ENCODE measurements at regions of chr17 and their contacts with region 1.

Region 1: GRCh38 chr17:51153210-51154072 is at the start of gene NME1:
- DNase-seq: peak; percentile 96
- ATAC-seq: peak; percentile 91
- H3K4me3 Mint-ChIP-seq: no peak within 1 kb of the TSS
- H3K27ac Mint-ChIP-seq: no peak within 1 kb of the TSS
- H3K4me1 Mint-ChIP-seq: no peaks in the 10 kb centered on the region
- H3K27me3 Mint-ChIP-seq: no peaks in the 10 kb centered on the region
- CTCF ChIP-seq: no peak
- total RNA-seq, gene NME1: 210 to 238 TPM (median 210 TPM) in 3 replicates

Region 2: DNA sequence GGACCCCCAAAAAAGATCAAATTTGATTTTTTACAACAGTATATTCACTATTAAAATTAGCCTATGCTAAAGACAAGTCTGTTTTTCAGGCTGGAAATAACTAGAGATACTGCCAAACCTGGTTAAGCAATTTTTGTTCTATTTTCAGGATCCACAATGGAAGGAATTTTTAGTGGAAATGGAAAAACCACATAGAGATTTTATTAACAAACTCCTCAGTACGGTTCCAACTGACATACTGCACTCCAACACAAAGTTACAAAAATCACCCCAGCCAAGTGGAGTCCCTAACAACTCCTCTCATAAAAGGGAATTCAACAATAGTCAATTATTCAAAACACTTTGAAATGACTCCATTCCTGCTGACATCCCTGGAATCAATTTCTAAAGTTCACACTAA is 185.6 kb before region 1 on chr17:
- CTCF ChIA-PET with region 1: no interaction called
- POLR2A ChIA-PET with region 1: no interaction called
- DNase-seq: no peak
- ATAC-seq: no peak
- H3K4me3 Mint-ChIP-seq: no peak overlapping the region
- H3K27ac Mint-ChIP-seq: no peak overlapping the region
- H3K4me1 Mint-ChIP-seq: no peaks in the 10 kb centered on the region
- H3K27me3 Mint-ChIP-seq: no peaks in the 10 kb centered on the region
- CTCF ChIP-seq: no peak

Region 3: DNA sequence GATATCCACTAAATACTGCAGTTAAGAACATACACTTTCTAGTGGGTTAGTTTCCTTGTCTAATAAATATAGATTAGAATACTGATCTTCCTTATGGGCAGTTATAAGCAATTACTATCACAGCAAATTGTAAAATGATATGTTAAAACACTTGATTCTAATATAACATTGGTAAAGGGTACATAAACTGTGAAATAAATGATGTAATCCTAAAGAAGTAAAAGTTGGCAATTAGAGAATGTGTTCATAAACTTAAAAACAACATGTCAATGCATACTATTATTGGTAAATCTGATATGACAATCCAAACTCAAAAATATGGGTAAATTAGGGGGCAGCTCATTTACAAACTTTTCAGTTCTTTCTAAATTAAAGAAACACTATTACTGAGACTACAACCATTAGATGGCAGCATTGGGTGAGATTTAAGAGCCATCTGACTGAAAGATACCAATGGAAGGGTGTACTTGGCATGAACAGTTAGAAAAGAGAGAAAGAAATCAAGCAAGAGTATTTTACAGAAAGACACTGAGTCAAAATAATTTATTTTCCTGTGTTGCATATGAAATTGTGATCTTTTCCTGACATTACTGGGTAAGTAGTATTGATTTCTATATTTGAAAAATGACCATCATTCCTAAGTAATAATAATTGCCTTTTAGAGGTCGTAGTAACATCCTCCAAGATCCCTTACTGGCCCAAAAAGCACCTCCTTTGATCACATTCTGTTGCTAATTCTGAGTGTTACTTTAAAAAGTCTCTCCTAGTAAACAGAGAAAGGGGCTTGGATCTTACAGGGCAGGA is 152.4 kb before region 1 on chr17:
- CTCF ChIA-PET with region 1: interaction called, 23 read pairs
- POLR2A ChIA-PET with region 1: no interaction called
- DNase-seq: no peak
- ATAC-seq: peak; percentile 59
- H3K4me3 Mint-ChIP-seq: no peak overlapping the region
- H3K27ac Mint-ChIP-seq: no peak overlapping the region
- H3K4me1 Mint-ChIP-seq: no peaks in the 10 kb centered on the region
- H3K27me3 Mint-ChIP-seq: no peaks in the 10 kb centered on the region
- CTCF ChIP-seq: no peak

Region 4: GRCh38 chr17:51046514-51047384 is 106.7 kb before region 1 on chr17:
- CTCF ChIA-PET with region 1: interaction called, 11 read pairs
- POLR2A ChIA-PET with region 1: interaction called, 3 read pairs
- DNase-seq: peak; percentile 74
- ATAC-seq: peak; percentile 98
- H3K4me3 Mint-ChIP-seq: no peak overlapping the region
- H3K27ac Mint-ChIP-seq: no peak overlapping the region
- H3K4me1 Mint-ChIP-seq: peaks cover 10% of the 10 kb centered on the region
- H3K27me3 Mint-ChIP-seq: no peaks in the 10 kb centered on the region
- CTCF ChIP-seq: no peak

Region 5: DNA sequence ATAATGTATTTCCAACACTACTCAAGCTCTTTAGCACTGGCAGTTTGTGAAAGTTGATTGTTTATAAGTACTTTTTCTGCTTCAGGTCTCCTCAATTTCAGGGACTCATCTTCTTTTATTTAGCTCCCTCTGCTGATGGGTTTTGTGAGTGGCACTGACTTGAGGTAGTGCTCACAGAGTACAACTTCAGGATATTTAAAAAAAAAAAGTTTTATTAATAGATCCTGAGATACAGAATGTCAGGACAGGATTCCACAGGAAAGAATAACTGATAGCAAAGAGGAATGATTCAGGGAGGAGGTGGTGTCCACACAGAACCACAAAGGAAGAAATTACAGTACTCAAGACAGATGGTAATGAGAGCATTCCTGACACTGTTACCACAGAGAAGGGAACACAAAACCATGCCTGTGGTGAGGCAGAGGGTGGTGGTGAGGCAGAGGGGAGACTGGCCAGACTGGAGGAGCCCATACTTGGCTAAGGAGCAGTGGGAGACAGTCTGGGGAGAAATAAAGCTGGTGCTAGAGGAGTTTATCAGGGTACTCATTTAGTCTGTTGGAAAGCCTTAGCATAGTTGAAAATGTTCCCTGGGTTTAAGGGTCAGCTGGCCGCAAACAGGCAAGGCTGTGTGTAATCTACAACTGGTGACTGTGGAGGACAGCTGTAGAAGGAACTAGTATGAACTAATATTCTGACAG is 96.5 kb before region 1 on chr17:
- CTCF ChIA-PET with region 1: interaction called, 15 read pairs
- POLR2A ChIA-PET with region 1: no interaction called
- DNase-seq: peak; percentile 40
- ATAC-seq: peak; percentile 99
- H3K4me3 Mint-ChIP-seq: no peak overlapping the region
- H3K27ac Mint-ChIP-seq: peak overlapping the region; percentile 95
- H3K4me1 Mint-ChIP-seq: peaks cover 11% of the 10 kb centered on the region
- H3K27me3 Mint-ChIP-seq: no peaks in the 10 kb centered on the region; the same call in 1 of the 2 replicates
- CTCF ChIP-seq: peak; percentile 33; the same call in 1 of the 2 replicates

Region 6: GRCh38 chr17:51120739-51121617 is 32.5 kb before region 1 on chr17 and contains the start of gene SPAG9:
- CTCF ChIA-PET with region 1: interaction called, 23 read pairs
- POLR2A ChIA-PET with region 1: interaction called, 5 read pairs
- DNase-seq: peak; percentile 94
- ATAC-seq: peak; percentile 82
- H3K4me3 Mint-ChIP-seq: peak within 1 kb of the TSS; percentile 96
- H3K27ac Mint-ChIP-seq: peak within 1 kb of the TSS; percentile 99
- H3K4me1 Mint-ChIP-seq: peaks cover 27% of the 10 kb centered on the region
- H3K27me3 Mint-ChIP-seq: no peaks in the 10 kb centered on the region
- CTCF ChIP-seq: no peak
- total RNA-seq, gene SPAG9: 39.6 to 51.9 TPM (median 41.4 TPM) in 3 replicates

Region 7: DNA sequence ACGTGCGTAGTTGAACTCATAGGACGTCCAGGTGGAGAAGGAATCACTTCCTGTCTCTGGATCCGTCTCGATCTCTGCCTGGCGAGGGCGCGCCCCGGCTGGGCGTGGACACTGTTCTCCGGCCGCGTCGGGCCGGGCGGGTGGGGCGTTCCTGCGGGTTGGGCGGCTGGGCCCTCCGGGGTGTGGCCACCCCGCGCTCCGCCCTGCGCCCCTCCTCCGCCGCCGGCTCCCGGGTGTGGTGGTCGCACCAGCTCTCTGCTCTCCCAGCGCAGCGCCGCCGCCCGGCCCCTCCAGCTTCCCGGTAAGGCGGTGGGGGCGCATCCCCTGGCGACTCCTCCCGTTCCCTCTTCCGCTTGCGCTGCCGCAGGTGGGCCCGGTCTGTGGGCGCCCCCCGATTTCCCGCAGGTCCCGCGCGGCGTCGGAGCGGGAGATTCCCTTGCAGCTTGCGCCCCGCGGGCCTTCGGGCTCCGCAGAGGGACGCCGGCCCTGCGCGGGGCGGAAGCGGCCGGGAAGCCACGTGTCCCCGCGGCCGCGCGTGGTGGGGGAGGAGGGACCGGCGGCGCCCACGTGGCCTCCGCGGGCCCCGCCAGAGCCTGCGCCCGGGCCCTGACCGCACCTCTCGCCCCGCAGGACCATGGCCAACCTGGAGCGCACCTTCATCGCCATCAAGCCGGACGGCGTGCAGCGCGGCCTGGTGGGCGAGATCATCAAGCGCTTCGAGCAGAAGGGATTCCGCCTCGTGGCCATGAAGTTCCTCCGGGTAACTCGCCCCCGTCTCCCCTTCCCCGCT is 13.0 kb after region 1 on chr17 and contains the start of gene NME2:
- CTCF ChIA-PET with region 1: interaction called, 17 read pairs
- POLR2A ChIA-PET with region 1: interaction called, 15 read pairs
- DNase-seq: peak; percentile 92
- ATAC-seq: peak; percentile 89
- H3K4me3 Mint-ChIP-seq: peak within 1 kb of the TSS; percentile 93
- H3K27ac Mint-ChIP-seq: peak within 1 kb of the TSS; percentile 97
- H3K4me1 Mint-ChIP-seq: peaks cover 16% of the 10 kb centered on the region
- H3K27me3 Mint-ChIP-seq: no peaks in the 10 kb centered on the region
- CTCF ChIP-seq: no peak
- total RNA-seq, gene NME2: 746 to 781 TPM (median 746 TPM) in 3 replicates

Region 8: GRCh38 chr17:51224402-51225262 is 71.2 kb after region 1 on chr17:
- CTCF ChIA-PET with region 1: no interaction called
- POLR2A ChIA-PET with region 1: no interaction called
- DNase-seq: no peak
- ATAC-seq: no peak
- H3K4me3 Mint-ChIP-seq: no peak overlapping the region
- H3K27ac Mint-ChIP-seq: peak overlapping the region; percentile 32
- H3K4me1 Mint-ChIP-seq: no peaks in the 10 kb centered on the region
- H3K27me3 Mint-ChIP-seq: no peaks in the 10 kb centered on the region
- CTCF ChIP-seq: no peak

Region 9: DNA sequence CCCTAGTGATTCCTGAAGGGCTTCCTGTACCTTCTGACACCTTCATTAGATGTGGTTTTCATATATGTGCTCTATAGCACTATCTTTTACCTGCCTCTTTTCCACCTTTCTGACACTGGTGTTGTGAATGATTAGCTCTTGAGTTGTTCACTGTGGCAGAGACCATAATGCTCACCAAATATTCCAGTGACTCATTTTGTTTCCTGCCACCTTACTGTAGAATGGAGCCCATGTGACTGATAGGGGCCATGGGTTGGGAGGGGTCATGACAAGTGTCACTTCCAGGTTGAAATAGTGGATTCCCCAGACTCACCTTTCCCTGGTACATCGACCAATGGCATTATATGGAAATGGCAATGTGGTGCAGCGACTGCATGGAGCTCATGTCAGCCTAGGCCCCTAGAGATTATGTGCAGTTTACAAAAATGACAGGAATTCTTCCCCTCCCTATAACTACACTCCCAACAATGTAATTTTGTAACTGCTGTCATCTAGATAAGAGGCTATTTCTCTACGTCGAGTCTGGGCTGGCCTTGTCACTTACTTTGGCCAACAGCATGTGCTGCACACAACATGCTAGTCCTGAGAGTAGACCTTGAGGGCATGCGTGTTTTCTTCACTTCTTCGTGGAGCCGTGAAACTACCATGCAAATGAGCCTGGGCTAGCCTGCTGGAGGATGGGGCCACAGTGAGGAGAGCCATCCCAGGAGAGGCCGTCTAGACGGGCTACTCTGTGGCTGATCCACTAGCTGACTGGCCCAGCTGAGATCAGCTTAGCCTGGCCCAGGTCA is 595.5 kb after region 1 on chr17:
- CTCF ChIA-PET with region 1: no interaction called
- POLR2A ChIA-PET with region 1: no interaction called
- DNase-seq: no peak
- ATAC-seq: no peak
- H3K4me3 Mint-ChIP-seq: no peak overlapping the region
- H3K27ac Mint-ChIP-seq: no peak overlapping the region
- H3K4me1 Mint-ChIP-seq: peaks cover 18% of the 10 kb centered on the region
- H3K27me3 Mint-ChIP-seq: no peaks in the 10 kb centered on the region
- CTCF ChIP-seq: no peak